Gastrocnemius medialis (tissue), 4 donors: ENCODE measurements at regions of chr11 and their contacts with region 1.

Region 1: GRCh38 chr11:100855466-100856067 is 168.5 kb downstream of the ARHGAP42 start:
- DNase-seq: no peak
- ATAC-seq: no peak
- H3K4me3 ChIP-seq: no peak overlapping the region
- H3K27ac ChIP-seq: no peak overlapping the region
- H3K4me1 ChIP-seq: no peaks in the 10 kb centered on the region
- H3K27me3 ChIP-seq: no peaks in the 10 kb centered on the region
- CTCF ChIP-seq: peak; percentile 50 to 77 (median 64)
- POLR2A ChIP-seq: no peak

Region 2: DNA sequence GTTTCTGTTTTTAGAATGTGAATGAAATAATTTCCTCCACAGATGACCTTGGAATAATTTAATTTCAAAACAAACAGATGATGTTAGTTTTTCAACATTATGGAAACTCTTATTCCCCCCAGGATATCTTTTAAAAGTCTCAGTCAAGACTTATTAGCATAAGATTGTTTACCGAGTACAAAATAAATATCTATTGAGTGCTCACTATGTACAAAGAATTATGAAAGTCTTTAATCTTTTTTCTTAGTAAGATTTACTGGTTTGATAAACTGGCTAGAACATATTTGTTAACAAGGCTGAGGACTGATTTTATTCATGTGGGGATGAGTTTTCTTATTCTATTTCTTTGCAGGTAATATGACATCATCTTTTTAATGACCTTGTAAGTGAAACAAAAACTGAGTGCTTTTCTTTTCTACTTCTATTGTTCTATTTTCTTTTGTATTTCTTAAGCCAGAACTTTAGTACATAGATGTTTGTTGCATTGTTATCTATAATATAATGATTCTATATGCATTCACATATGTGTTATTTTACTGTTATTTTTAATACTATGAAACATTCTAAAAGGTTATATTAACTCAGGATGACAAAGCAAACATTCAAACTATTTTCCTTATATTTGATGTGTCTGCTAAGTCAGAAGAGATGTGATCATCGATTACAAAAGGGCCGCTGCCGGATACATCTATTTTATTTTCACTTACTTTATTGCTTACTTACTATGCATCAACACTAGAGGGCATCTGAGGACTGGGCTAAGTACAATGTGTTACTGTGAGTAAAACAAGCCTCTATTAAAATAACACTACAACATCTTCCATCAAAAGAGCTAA is 279.5 kb before region 1 on chr11:
- in situ Hi-C with region 1: loop called (anchors 5 to 10 kb)
- intact Hi-C with region 1: loop called (anchors 1 kb)
- DNase-seq: peak in 1 of 2 donors; percentile 9
- ATAC-seq: peak; percentile 64 to 76
- H3K4me3 ChIP-seq: no peak overlapping the region
- H3K27ac ChIP-seq: no peak overlapping the region
- H3K4me1 ChIP-seq: peaks cover 0 to 14% of the 10 kb centered on the region in 2 donors
- H3K27me3 ChIP-seq: no peaks in the 10 kb centered on the region
- CTCF ChIP-seq: peak; percentile 64 to 82 (median 76)
- POLR2A ChIP-seq: no peak

Region 3: DNA sequence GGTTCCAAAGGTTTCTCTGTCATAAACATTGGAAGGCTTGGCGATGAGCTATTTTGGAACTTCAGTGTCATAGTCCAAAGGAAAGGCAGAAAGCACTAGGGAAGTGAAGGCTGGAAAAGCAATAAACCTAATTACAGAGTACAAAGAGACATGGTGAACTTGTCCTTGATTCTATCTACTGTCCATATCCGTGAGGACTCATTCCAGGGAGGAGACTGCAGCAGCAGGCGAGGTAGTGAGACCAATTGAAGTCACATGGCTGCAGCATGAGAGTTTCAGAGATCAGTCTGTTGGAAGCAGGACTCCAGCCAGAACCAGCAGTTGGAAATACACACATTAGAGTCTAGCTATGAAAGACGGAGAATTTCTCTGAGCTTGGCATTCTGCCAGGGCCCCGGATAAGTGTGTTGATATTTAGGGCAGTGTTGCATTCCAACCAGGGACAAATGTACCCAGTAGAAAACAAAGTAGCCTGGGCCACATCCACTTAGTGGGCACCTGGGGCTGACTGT is 222.6 kb before region 1 on chr11:
- in situ Hi-C with region 1: no loop called
- intact Hi-C with region 1: loop called (anchors 5 kb)
- DNase-seq: peak; percentile 30 to 44
- ATAC-seq: peak; percentile 85 to 90
- H3K4me3 ChIP-seq: peak overlapping the region in 2 of 4 donors; percentile 4 to 13
- H3K27ac ChIP-seq: peak overlapping the region; percentile 60 to 73 (median 62)
- H3K4me1 ChIP-seq: peaks cover 19 to 47% of the 10 kb centered on the region in 2 donors
- H3K27me3 ChIP-seq: no peaks in the 10 kb centered on the region
- CTCF ChIP-seq: no peak
- POLR2A ChIP-seq: no peak

Region 4: GRCh38 chr11:100681064-100681502 is 174.5 kb before region 1 on chr11:
- in situ Hi-C with region 1: loop called in 3 of 4 experiments (anchors 5 to 10 kb)
- intact Hi-C with region 1: loop called (anchors 5 kb)
- DNase-seq: peak; percentile 29 to 57
- ATAC-seq: peak; percentile 15 to 56
- H3K4me3 ChIP-seq: no peak overlapping the region
- H3K27ac ChIP-seq: peak overlapping the region in 3 of 4 donors; percentile 41 to 45 (median 43)
- H3K4me1 ChIP-seq: peaks cover 4 to 21% of the 10 kb centered on the region in 2 donors
- H3K27me3 ChIP-seq: no peaks in the 10 kb centered on the region
- CTCF ChIP-seq: no peak
- POLR2A ChIP-seq: no peak

Region 5: GRCh38 chr11:100687630-100688395 is 167.8 kb before region 1 on chr11:
- in situ Hi-C with region 1: loop called in 3 of 4 experiments (anchors 5 to 10 kb)
- intact Hi-C with region 1: loop called (anchors 5 kb)
- DNase-seq: peak; percentile 38 to 56
- ATAC-seq: peak; percentile 87 to 91
- H3K4me3 ChIP-seq: peak overlapping the region; percentile 52 to 69 (median 68)
- H3K27ac ChIP-seq: peak overlapping the region; percentile 77 to 90 (median 84)
- H3K4me1 ChIP-seq: peaks cover 12 to 27% of the 10 kb centered on the region in 2 donors
- H3K27me3 ChIP-seq: no peaks in the 10 kb centered on the region
- CTCF ChIP-seq: peak in 4 of 5 experiments; percentile 38 to 64 (median 60)
- POLR2A ChIP-seq: peak in 1 of 2 donors; percentile 31

Region 6: DNA sequence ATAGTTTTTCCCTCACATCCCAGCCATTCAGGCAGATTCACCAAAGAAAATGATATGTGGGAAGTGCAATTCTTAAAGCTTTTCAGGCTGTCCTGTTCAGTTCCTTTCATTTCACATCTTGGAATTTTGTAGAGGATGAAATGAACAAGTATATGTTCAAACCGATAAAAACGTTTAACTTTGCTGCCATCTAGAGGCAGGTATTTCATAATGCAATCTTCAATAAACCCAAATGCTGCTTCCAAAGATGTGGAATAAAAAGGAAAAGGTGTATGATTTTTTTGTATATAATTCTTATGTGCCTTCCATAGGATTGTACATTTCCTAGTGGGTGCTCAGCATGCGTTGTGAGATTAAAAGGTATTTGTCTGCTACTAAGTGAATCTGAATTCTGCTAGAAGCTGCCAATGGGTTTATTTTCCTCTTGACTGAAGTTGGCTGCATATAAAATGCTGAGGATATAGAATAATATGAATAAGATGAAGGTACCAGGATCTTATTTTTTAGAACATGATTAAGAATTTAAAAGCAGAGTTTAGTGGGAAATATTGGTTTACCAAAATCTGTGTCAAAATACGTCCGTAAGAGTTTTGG is 74.7 kb after region 1 on chr11:
- in situ Hi-C with region 1: loop called in 2 of 4 experiments (anchors 5 to 10 kb)
- intact Hi-C with region 1: loop called (anchors 5 kb)
- DNase-seq: no peak
- ATAC-seq: peak; percentile 47 to 61
- H3K4me3 ChIP-seq: no peak overlapping the region
- H3K27ac ChIP-seq: no peak overlapping the region
- H3K4me1 ChIP-seq: no peaks in the 10 kb centered on the region
- H3K27me3 ChIP-seq: no peaks in the 10 kb centered on the region
- CTCF ChIP-seq: peak; percentile 46 to 65 (median 51)
- POLR2A ChIP-seq: no peak